GM12878 (cell line): ENCODE measurements at regions of chr5 and their contacts with region 1.

Region 1: DNA sequence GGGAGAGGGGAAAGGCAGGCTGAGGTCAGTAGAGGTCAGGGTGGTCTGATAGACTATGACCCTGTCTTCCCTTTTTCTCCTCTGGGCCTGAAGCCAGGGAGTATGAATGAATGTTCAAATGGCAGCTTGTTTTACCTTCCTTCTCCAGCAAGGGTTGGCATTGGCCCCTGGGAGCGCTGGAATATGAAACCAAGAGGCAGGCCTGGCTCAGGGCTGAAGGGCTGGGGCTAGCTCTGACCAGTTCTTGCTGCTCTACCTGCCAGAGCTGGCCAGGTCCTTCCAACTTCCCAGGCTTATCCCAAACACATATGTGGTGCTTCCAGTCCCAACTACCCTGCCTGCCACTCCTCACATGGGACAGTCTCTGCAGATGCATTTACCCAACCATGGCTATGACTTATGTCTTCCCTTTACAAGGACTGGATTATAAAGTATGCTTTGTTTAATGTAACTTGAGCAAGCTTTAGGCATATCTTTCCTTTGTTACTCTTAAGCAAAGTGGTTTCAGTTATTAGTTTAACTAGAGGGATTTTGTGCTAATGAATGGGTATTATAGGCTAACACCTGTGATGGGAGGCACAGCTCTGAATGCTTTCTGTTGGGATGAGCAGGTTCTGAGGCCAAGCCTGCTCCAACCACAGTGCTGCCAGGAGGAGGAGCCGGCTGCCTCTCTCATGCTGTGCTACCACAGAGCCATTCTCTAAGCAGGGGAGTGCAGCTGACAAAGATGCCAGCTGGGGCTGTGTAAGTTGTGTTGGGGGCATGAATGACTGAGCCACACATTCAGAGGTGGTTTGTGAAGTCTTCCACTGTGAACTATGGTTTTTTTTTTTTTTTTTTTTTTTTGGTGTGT is 6.1 kb downstream of the CCNI2 start:
- DNase-seq: no peak
- ATAC-seq: peak; percentile 42
- H3K4me3 ChIP-seq: no peak overlapping the region
- H3K27ac ChIP-seq: no peak overlapping the region
- H3K4me1 ChIP-seq: peaks cover 25% of the 10 kb centered on the region
- H3K27me3 ChIP-seq: no peaks in the 10 kb centered on the region
- CTCF ChIP-seq: peak; percentile 6 to 44 (median 15); a peak in 3 of 6 replicates
- EP300 ChIP-seq: no peak
- POLR2A ChIP-seq: no peak
- RAD21 ChIP-seq: peak; percentile 27; the same call in 1 of the 2 replicates

Region 2: GRCh38 chr5:132639706-132640130 is 113.6 kb before region 1 on chr5:
- CTCF ChIA-PET with region 1: interaction called, 3 read pairs
- POLR2A ChIA-PET with region 1: interaction called, 6 read pairs
- RAD21 ChIA-PET with region 1: interaction called, 9 read pairs
- SMC1A ChIA-PET with region 1: interaction called, 15 read pairs
- in situ Hi-C with region 1: no loop called
- intact Hi-C with region 1: no loop called
- DNase-seq: peak; percentile 82
- ATAC-seq: peak; percentile 78
- H3K4me3 ChIP-seq: no peak overlapping the region
- H3K27ac ChIP-seq: peak overlapping the region; percentile 28
- H3K4me1 ChIP-seq: peaks cover 59% of the 10 kb centered on the region
- H3K27me3 ChIP-seq: no peaks in the 10 kb centered on the region
- CTCF ChIP-seq: no peak
- EP300 ChIP-seq: peak in 1 of 2 experiments; percentile 70; a peak in 2 of 4 replicates
- POLR2A ChIP-seq: no peak
- RAD21 ChIP-seq: no peak

Region 3: GRCh38 chr5:132736853-132737833 is 16.2 kb before region 1 on chr5 and contains the start of gene KIF3A:
- CTCF ChIA-PET with region 1: interaction called, 23 read pairs
- POLR2A ChIA-PET with region 1: interaction called, 21 read pairs
- RAD21 ChIA-PET with region 1: interaction called, 27 read pairs
- SMC1A ChIA-PET with region 1: interaction called, 52 read pairs
- in situ Hi-C with region 1: no loop called
- intact Hi-C with region 1: no loop called
- DNase-seq: peak; percentile 94
- ATAC-seq: peak; percentile 91
- H3K4me3 ChIP-seq: peak within 1 kb of the TSS; percentile 80
- H3K27ac ChIP-seq: peak within 1 kb of the TSS; percentile 52
- H3K4me1 ChIP-seq: no peaks in the 10 kb centered on the region
- H3K27me3 ChIP-seq: no peaks in the 10 kb centered on the region
- CTCF ChIP-seq: no peak
- EP300 ChIP-seq: no peak
- POLR2A ChIP-seq: peak; percentile 89
- RAD21 ChIP-seq: no peak
- polyA plus RNA-seq, gene KIF3A: 2.7 to 3.0 TPM

Region 4: GRCh38 chr5:132777209-132778069 is 24.1 kb after region 1 on chr5 and contains the start of gene SEPTIN8:
- CTCF ChIA-PET with region 1: interaction called, 15 read pairs
- POLR2A ChIA-PET with region 1: interaction called, 56 read pairs
- RAD21 ChIA-PET with region 1: interaction called, 9 read pairs
- SMC1A ChIA-PET with region 1: interaction called, 88 read pairs
- in situ Hi-C with region 1: no loop called
- intact Hi-C with region 1: no loop called
- DNase-seq: no peak
- ATAC-seq: peak; percentile 74
- H3K4me3 ChIP-seq: peak within 1 kb of the TSS; percentile 83
- H3K27ac ChIP-seq: peak within 1 kb of the TSS; percentile 50
- H3K4me1 ChIP-seq: peaks cover 7% of the 10 kb centered on the region
- H3K27me3 ChIP-seq: no peaks in the 10 kb centered on the region
- CTCF ChIP-seq: no peak
- EP300 ChIP-seq: no peak
- POLR2A ChIP-seq: 0 out of 2 replicates have a peak, but pooled peaks have one; percentile 8
- RAD21 ChIP-seq: no peak
- polyA plus RNA-seq, gene SEPTIN8: 6.1 to 7.6 TPM

Region 5: DNA sequence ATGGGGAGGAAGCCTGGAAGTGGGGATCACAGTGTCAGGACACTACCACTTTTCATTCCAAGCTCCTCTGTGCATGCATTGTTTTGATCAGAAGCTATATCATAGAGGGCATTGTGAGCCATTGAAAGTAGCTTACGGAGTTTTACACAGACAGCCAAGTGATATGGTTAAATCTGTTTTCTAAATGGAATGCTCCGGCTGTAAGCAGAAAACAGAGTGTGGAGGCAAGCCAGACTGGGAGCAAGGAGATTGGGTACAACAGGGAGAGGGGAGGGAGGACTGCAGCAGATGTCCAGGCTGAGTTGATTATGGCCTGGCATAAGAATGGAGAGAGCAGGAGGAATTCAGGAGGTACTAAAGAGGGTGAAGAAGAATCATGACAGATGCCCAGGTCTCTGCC is 44.3 kb after region 1 on chr5:
- CTCF ChIA-PET with region 1: interaction called, 50 read pairs
- POLR2A ChIA-PET with region 1: interaction called, 7 read pairs
- RAD21 ChIA-PET with region 1: interaction called, 16 read pairs
- SMC1A ChIA-PET with region 1: interaction called, 44 read pairs
- in situ Hi-C with region 1: no loop called
- intact Hi-C with region 1: no loop called
- DNase-seq: no peak
- ATAC-seq: no peak
- H3K4me3 ChIP-seq: no peak overlapping the region
- H3K27ac ChIP-seq: no peak overlapping the region
- H3K4me1 ChIP-seq: no peaks in the 10 kb centered on the region
- H3K27me3 ChIP-seq: no peaks in the 10 kb centered on the region
- CTCF ChIP-seq: no peak
- EP300 ChIP-seq: no peak
- POLR2A ChIP-seq: no peak
- RAD21 ChIP-seq: no peak

Region 6: GRCh38 chr5:132807163-132807838 is 53.9 kb after region 1 on chr5:
- CTCF ChIA-PET with region 1: interaction called, 50 read pairs
- POLR2A ChIA-PET with region 1: interaction called, 6 read pairs
- RAD21 ChIA-PET with region 1: interaction called, 17 read pairs
- SMC1A ChIA-PET with region 1: interaction called, 57 read pairs
- in situ Hi-C with region 1: no loop called
- intact Hi-C with region 1: no loop called
- DNase-seq: peak; percentile 20
- ATAC-seq: peak; percentile 94
- H3K4me3 ChIP-seq: no peak overlapping the region
- H3K27ac ChIP-seq: no peak overlapping the region
- H3K4me1 ChIP-seq: no peaks in the 10 kb centered on the region
- H3K27me3 ChIP-seq: peaks cover 0 to 4% of the 10 kb centered on the region in 2 experiments; a peak in 2 of 4 replicates
- CTCF ChIP-seq: peak; percentile 3 to 45 (median 36); a peak in 3 of 6 replicates
- EP300 ChIP-seq: peak; percentile 17 to 59; a peak in 2 of 4 replicates
- POLR2A ChIP-seq: no peak
- RAD21 ChIP-seq: no peak